ENCODE measurements at regions of chr3 and their contacts with region 1.

Region 1: GRCh38 chr3:128438488-128439072 is 28.1 kb downstream of the DNAJB8 start:
- DNase-seq: no peak
- H3K4me3 ChIP-seq: no peak overlapping the region
- H3K27ac ChIP-seq: no peak overlapping the region
- H3K4me1 ChIP-seq: peaks cover 5 to 16% (median 12%) of the 10 kb centered on the region in 4 experiments
- H3K27me3 ChIP-seq: peaks cover 0 to 17% (median 7%) of the 10 kb centered on the region in 4 experiments; a peak in 5 of 7 replicates
- CTCF ChIP-seq: peak in 2 of 3 experiments; percentile 86 to 95; a peak in 3 of 4 replicates
- EP300 ChIP-seq: no peak
- POLR2A ChIP-seq: no peak
- RAD21 ChIP-seq: peak; percentile 56 to 70

Region 2: DNA sequence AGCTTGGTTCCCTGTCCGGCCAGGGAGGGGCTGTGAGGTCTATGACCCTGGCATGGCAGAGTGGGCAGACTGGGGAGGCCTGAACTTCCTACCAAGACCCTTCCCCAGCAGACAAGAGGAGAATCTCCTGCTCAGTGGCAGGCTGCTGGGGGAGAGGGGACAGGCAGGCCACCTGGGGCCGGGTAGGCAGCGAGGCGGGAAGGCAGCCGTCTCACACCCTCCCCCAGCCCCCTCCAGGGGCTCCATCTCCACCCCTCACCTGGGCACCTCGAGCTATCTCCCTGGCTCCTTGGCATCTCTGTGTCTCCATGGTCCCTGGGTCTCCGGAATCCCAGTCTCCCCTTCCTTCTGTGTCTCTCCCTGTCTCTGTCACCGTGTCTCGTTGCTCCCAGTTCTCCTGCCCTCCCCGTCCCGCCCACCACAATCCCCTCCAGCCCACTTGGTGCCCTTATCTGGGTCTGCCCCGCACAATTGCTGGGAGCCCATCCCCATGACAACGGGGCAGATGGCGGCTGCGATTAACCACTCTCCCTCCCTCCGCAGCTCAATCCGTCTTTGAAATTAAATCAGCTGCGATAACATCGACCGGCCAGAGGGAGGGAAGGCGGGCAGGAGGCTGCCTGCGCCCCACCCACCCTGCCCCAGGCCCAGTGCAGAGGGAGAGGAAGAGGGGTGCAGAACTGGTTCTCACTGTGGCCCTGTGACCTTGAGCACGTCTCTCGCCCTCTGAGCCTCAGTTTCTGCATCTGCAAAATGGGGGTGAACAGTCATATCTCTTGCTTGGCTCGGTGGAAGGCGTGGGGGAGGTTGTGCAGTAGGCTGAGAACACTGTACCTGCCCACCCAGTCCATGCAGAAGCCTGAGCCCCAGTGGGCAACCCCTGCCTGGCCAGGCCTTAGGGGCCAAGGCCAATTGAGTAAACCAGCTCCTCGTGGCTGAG is 18.5 kb after region 1 on chr3:
- CTCF ChIA-PET with region 1: interaction called, 135 read pairs
- POLR2A ChIA-PET with region 1: interaction called, 3 read pairs
- DNase-seq: no peak
- H3K4me3 ChIP-seq: no peak overlapping the region
- H3K27ac ChIP-seq: no peak overlapping the region
- H3K4me1 ChIP-seq: peaks cover 0 to 5% (median 0%) of the 10 kb centered on the region in 4 experiments; a peak in 1 of 7 replicates
- H3K27me3 ChIP-seq: peaks cover 0 to 6% (median 0%) of the 10 kb centered on the region in 4 experiments; a peak in 4 of 7 replicates
- CTCF ChIP-seq: no peak
- EP300 ChIP-seq: no peak
- POLR2A ChIP-seq: no peak
- RAD21 ChIP-seq: no peak

Region 3: GRCh38 chr3:128482666-128483656 is 44.4 kb after region 1 on chr3:
- CTCF ChIA-PET with region 1: interaction called, 30 read pairs
- POLR2A ChIA-PET with region 1: no interaction called
- DNase-seq: no peak
- H3K4me3 ChIP-seq: peak overlapping the region in 3 of 4 experiments; percentile 27 to 48 (median 40); a peak in 5 of 8 replicates
- H3K27ac ChIP-seq: no peak overlapping the region
- H3K4me1 ChIP-seq: peaks cover 8 to 66% (median 50%) of the 10 kb centered on the region in 4 experiments
- H3K27me3 ChIP-seq: peaks cover 85 to 100% (median 98%) of the 10 kb centered on the region in 4 experiments
- CTCF ChIP-seq: no peak
- EP300 ChIP-seq: no peak
- POLR2A ChIP-seq: no peak
- RAD21 ChIP-seq: no peak

Region 4: DNA sequence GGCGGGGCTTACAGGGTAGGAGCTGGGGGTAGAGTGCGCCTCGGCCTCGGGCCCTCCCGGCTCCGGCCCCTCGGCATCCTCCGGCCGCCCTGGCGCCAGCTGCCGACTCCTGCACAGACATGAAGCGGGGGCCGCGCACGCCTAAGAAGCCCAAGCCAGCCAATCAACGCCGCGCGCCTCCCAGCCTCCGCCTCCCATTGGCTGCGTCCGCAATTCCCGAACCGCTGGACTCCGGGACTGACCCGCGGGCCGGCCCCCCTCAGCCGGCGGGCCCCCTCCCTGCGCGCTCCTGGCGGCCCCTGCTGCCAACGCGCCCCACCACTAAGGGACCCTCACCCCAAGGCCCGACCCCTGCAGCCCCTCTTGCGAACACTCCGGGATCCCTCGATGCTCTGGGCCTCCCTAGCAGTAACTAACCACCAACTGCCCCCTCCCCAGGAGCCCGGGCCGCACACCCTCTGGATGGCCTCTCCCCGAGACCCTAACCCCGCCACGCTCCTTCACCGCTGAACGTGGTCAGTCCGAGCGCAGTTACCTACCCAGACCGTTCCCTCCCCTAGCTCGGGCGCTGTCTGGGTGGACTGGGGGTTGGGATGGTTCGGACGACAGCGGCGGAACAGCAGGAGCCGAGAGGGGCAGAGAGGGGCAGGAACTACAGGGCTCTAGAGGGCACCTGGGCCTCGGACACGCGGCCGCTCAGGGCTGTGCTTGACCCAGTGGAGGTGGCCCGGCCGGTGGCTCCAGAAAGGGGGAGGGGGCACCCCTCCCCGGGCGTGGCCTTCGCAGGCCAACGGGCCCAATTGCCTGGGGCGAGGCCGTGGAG is 49.4 kb after region 1 on chr3:
- CTCF ChIA-PET with region 1: interaction called, 30 read pairs
- POLR2A ChIA-PET with region 1: no interaction called
- DNase-seq: peak; percentile 62 to 93
- H3K4me3 ChIP-seq: peak overlapping the region; percentile 28 to 63 (median 32); a peak in 6 of 8 replicates
- H3K27ac ChIP-seq: no peak overlapping the region
- H3K4me1 ChIP-seq: peaks cover 5 to 83% (median 55%) of the 10 kb centered on the region in 4 experiments
- H3K27me3 ChIP-seq: peaks cover 89 to 100% (median 99%) of the 10 kb centered on the region in 4 experiments
- CTCF ChIP-seq: no peak
- EP300 ChIP-seq: no peak
- POLR2A ChIP-seq: no peak
- RAD21 ChIP-seq: no peak

Region 5: GRCh38 chr3:128503164-128503651 is 64.6 kb after region 1 on chr3:
- CTCF ChIA-PET with region 1: interaction called, 10 read pairs
- POLR2A ChIA-PET with region 1: no interaction called
- DNase-seq: peak in 1 of 2 experiments; percentile 50
- H3K4me3 ChIP-seq: no peak overlapping the region
- H3K27ac ChIP-seq: no peak overlapping the region; the same call in 1 of the 2 replicates
- H3K4me1 ChIP-seq: peaks cover 0 to 2% (median 0%) of the 10 kb centered on the region in 4 experiments; a peak in 1 of 7 replicates
- H3K27me3 ChIP-seq: peaks cover 0 to 11% (median 10%) of the 10 kb centered on the region in 4 experiments; a peak in 6 of 7 replicates
- CTCF ChIP-seq: peak in 2 of 3 experiments; percentile 56 to 64; a peak in 3 of 4 replicates
- EP300 ChIP-seq: no peak
- POLR2A ChIP-seq: no peak
- RAD21 ChIP-seq: peak; percentile 54 to 70

Region 6: DNA sequence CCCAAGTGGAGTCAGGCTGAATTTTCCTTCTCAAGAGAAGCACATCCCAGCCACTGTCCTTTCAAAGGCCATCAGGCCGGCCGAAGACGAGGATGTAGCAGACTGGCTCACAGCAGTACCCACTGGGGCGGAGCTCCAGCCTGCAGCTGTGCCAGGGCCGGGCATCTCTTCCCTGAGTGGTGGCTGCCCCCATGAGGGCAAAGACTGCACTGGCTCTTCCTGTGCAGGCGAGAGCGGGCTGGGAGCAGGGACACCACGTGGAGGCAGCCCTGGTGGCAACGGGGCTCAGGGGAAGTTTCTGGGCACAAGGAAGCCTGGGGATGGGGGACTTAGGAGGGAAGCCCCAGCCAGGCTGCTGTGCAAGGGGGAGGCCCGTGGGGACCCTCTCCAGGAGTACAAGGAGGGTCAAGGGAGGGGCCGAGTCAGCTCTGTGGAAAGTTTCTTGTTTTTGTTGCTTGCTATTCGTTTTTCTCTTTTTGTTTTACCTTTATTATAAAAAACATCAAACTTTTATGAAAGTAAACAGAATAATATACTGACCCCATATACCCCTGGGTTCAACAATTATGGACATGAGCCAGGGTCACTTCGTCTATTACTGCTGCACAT is 145.9 kb after region 1 on chr3:
- CTCF ChIA-PET with region 1: interaction called, 11 read pairs
- POLR2A ChIA-PET with region 1: no interaction called
- DNase-seq: peak in 1 of 2 experiments; percentile 80
- H3K4me3 ChIP-seq: no peak overlapping the region
- H3K27ac ChIP-seq: no peak overlapping the region
- H3K4me1 ChIP-seq: peaks cover 0 to 3% (median 2%) of the 10 kb centered on the region in 4 experiments; a peak in 4 of 7 replicates
- H3K27me3 ChIP-seq: peaks cover 0 to 7% (median 5%) of the 10 kb centered on the region in 4 experiments; a peak in 3 of 7 replicates
- CTCF ChIP-seq: peak in 2 of 3 experiments; percentile 95 to 97; a peak in 3 of 4 replicates
- EP300 ChIP-seq: 0 out of 3 replicates have a peak, but pooled peaks of 1 of the 2 experiments have one; percentile 7
- POLR2A ChIP-seq: no peak
- RAD21 ChIP-seq: peak; percentile 98 to 100

Measured in H1 (cell line).